Naive thymus-derived CD4-positive, alpha-beta T cell (primary cell): ENCODE measurements at regions of chr3 and their contacts with region 1.

Region 1: DNA sequence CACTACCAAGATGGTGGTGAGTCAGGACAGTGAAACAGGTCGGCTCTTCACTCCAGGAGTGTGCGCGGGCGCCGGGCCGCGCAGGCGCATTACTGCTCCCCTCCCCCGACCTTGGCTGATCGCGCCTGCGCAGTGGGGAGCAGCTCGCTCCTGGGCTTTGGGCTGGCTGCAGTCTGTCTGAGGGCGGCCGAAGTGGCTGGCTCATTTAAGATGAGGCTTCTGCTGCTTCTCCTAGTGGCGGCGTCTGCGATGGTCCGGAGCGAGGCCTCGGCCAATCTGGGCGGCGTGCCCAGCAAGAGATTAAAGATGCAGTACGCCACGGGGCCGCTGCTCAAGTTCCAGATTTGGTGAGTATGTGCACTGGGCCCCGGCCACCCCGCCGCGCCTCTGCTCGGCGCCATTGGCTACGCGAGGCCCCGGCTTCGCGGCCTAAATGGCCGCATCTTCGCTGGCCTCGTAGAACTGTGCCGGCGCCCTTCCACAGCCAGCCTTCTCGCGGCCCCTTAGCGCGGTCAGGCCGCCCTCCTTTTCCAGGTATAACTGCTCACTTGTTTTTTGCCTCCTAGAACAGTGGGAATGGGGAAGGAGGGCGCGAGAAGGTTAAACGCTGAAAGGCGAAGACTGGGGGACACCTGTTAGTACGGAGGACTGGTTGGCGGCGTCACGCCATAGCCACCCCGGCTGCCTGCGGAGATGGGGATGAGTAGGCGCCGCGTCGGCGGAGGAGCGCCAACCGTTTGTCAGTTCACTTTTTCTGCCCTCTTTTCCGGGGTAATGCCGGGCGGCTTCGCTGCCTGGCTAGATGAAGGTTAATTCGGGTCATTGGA is at the start of gene SELENOT:
- DNase-seq: peak; percentile 91 to 97 (median 96)
- ATAC-seq: peak; percentile 89
- H3K4me3 ChIP-seq: peak within 1 kb of the TSS; percentile 76
- H3K4me3 Mint-ChIP-seq: peak within 1 kb of the TSS; percentile 93 to 100 (median 98)
- H3K27ac ChIP-seq: peak within 1 kb of the TSS; percentile 90
- H3K27ac Mint-ChIP-seq: peak within 1 kb of the TSS; percentile 97 to 100 (median 99)
- H3K4me1 ChIP-seq: peaks cover 27 to 41% of the 10 kb centered on the region in 2 donors
- H3K4me1 Mint-ChIP-seq: peaks cover 43 to 78% (median 70%) of the 10 kb centered on the region in 7 donors
- H3K27me3 ChIP-seq: no peaks in the 10 kb centered on the region
- H3K27me3 Mint-ChIP-seq: no peaks in the 10 kb centered on the region
- total RNA-seq, gene SELENOT: 51.3 to 104 (median 78.1) TPM

Region 2: GRCh38 chr3:149646181-149646766 is 957.1 kb before region 1 on chr3:
- CTCF ChIA-PET with region 1: no interaction called
- POLR2A ChIA-PET with region 1: no interaction called
- intact Hi-C with region 1: no loop called
- DNase-seq: no peak
- ATAC-seq: no peak
- H3K4me3 ChIP-seq: no peak overlapping the region
- H3K4me3 Mint-ChIP-seq: no peak overlapping the region
- H3K27ac ChIP-seq: no peak overlapping the region
- H3K27ac Mint-ChIP-seq: no peak overlapping the region
- H3K4me1 ChIP-seq: no peaks in the 10 kb centered on the region
- H3K4me1 Mint-ChIP-seq: no peaks in the 10 kb centered on the region
- H3K27me3 ChIP-seq: no peaks in the 10 kb centered on the region
- H3K27me3 Mint-ChIP-seq: peaks cover 15 to 45% (median 28%) of the 10 kb centered on the region in 5 donors

Region 3: DNA sequence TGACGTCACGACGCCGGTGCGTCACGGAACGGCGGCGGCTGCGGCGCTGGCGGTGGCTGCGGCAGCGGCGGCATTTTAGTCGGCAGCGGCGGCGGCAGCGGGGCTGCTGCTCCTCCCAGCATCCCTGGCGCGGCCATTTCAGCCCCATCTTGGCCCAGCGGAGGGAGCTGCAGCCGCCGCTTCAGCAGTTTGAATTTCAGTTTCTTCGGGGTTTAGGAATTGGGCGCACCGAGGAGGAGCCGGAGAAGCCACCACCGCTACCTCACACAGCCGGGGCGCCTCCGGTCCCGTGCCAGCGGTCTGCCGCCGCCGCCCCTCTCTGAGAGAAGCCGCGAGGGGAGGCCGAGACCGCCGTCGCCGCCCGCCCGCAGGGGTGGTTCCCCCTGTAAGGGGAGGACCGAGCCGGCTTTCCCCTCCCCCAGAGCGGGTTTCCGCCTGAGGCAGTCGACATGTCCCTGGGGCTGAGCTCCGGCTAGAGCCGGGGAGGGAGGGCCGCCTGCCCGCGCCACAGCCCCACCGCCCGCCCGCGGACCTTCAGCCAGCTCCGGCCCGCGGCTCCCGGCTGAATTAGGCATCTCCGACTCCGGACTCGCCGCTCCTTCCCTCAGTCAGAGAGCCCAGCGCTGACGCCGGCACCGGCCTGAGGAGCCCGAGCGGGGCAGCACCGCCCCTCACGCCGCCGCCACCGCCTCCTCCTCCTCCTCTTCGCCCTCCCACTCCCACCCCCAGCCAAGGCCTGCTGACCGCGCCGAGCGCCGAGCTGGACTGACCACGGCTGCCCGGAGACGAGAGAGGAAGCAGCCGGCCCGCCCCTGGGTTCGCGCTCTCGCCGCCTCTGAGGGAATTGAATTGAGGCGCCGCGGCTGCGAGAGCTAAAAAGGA is 194.9 kb before region 1 on chr3 and contains the start of gene TSC22D2:
- CTCF ChIA-PET with region 1: no interaction called
- POLR2A ChIA-PET with region 1: interaction called, 21 read pairs
- intact Hi-C with region 1: loop called (anchors 1 kb)
- DNase-seq: peak; percentile 94 to 99 (median 98)
- ATAC-seq: peak; percentile 79
- H3K4me3 ChIP-seq: peak within 1 kb of the TSS; percentile 96
- H3K4me3 Mint-ChIP-seq: peak within 1 kb of the TSS; percentile 88 to 98 (median 91)
- H3K27ac ChIP-seq: peak within 1 kb of the TSS; percentile 98
- H3K27ac Mint-ChIP-seq: peak within 1 kb of the TSS; percentile 89 to 100 (median 98)
- H3K4me1 ChIP-seq: peaks cover 7 to 8% of the 10 kb centered on the region in 2 donors
- H3K4me1 Mint-ChIP-seq: peaks cover 25 to 41% (median 39%) of the 10 kb centered on the region in 7 donors
- H3K27me3 ChIP-seq: no peaks in the 10 kb centered on the region
- H3K27me3 Mint-ChIP-seq: peaks cover 0 to 13% (median 0%) of the 10 kb centered on the region in 5 donors
- total RNA-seq, gene TSC22D2: 17.9 to 42.1 (median 27.3) TPM

Region 4: GRCh38 chr3:150582620-150583019 is 20.7 kb before region 1 on chr3:
- CTCF ChIA-PET with region 1: interaction called, 3 read pairs
- POLR2A ChIA-PET with region 1: interaction called, 6 read pairs
- intact Hi-C with region 1: loop called in 1 of 2 experiments (anchors 2 kb)
- DNase-seq: no peak
- ATAC-seq: no peak
- H3K4me3 ChIP-seq: no peak overlapping the region
- H3K4me3 Mint-ChIP-seq: peak overlapping the region in 1 of 10 donors; percentile 20
- H3K27ac ChIP-seq: no peak overlapping the region
- H3K27ac Mint-ChIP-seq: peak overlapping the region in 3 of 9 donors; percentile 5 to 38 (median 25)
- H3K4me1 ChIP-seq: no peaks in the 10 kb centered on the region
- H3K4me1 Mint-ChIP-seq: peaks cover 0 to 19% (median 0%) of the 10 kb centered on the region in 7 donors
- H3K27me3 ChIP-seq: no peaks in the 10 kb centered on the region
- H3K27me3 Mint-ChIP-seq: no peaks in the 10 kb centered on the region

Region 5: DNA sequence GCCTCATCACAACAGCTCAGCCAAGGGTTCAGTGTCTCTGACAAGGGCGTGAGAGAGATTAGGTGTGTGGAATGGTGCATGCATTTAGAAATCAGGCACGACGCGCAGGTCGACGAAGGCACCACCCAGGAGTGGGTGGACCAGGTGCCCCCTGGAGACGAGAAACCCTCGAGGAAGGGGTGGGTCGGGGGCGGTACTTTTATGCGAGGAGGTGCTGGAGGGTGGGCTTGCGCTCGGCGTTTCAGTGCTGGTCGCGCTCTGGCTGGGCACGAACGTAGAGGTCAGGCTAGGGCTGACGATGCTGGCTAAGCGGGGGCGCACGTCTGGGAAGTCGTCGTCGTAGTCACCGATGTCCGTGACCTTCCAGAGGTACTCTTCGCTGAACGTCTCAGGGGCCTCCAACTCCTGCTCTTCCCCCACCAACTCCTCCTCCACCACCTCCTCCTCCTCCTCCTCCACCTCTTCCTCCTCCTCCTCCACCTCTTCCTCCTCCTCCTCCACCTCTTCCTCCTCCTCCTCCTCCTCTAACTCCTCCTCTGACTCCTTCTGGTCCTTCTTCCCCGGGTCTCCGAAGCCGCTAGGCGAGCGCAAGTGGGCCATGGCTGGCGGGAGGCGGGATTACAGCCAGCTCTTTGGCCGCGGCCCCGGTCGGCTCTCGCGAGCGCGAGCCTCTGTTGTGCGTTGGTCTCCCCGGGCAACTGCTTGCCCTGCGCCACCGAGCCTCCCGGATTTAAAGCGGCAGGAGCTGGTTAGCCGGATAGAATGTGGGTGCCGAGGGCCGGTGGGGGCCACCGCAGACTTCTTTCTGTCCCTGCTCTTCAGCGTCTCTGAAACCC is 100.2 kb after region 1 on chr3 and contains the start of gene ERICH6:
- CTCF ChIA-PET with region 1: no interaction called
- POLR2A ChIA-PET with region 1: interaction called, 9 read pairs
- intact Hi-C with region 1: loop called (anchors 1 kb)
- DNase-seq: peak; percentile 59 to 83 (median 71)
- ATAC-seq: peak; percentile 93
- H3K4me3 ChIP-seq: peak within 1 kb of the TSS; percentile 94
- H3K4me3 Mint-ChIP-seq: peak within 1 kb of the TSS; percentile 82 to 98 (median 97)
- H3K27ac ChIP-seq: peak within 1 kb of the TSS; percentile 84
- H3K27ac Mint-ChIP-seq: peak within 1 kb of the TSS; percentile 93 to 100 (median 97)
- H3K4me1 ChIP-seq: peaks cover 4 to 5% of the 10 kb centered on the region in 2 donors
- H3K4me1 Mint-ChIP-seq: peaks cover 11 to 24% (median 20%) of the 10 kb centered on the region in 7 donors
- H3K27me3 ChIP-seq: no peaks in the 10 kb centered on the region
- H3K27me3 Mint-ChIP-seq: peaks cover 0 to 6% (median 0%) of the 10 kb centered on the region in 5 donors
- total RNA-seq, gene ERICH6: 0.24 to 1.4 (median 0.53) TPM

Region 6: DNA sequence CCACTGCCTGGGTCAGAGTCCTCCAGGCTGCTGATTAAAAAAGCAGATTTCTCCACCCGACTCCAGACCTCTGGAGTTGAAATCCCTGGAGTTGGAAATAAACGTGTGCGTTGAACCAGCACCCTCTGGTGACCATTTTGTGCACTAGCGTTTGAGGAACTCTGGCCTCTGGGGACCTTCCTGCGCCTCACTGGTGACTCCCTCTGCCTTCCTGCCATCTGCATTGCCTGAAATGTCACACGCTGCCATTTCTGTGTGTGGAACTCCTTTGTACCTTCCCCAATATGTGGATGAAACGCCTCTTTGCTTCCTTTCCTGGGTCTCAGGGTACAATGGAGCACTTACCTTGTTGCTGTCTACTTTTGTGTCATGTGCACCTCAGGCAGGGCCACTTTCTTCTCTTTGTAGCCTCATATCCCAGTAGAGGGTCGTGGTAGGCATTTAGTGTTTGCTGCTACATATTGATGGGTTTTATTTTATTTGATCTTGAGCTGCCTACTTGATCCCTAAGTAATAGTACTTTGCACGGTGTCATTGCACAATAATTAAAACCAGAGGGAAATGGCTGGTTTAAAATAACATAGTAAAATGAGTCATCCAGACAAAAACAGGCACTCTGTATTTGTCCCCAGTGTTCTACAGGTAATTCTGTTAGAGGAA is 542.8 kb after region 1 on chr3:
- CTCF ChIA-PET with region 1: no interaction called
- POLR2A ChIA-PET with region 1: no interaction called
- intact Hi-C with region 1: loop called in 1 of 2 experiments (anchors 5 kb)
- DNase-seq: peak; percentile 25 to 63 (median 36)
- ATAC-seq: peak; percentile 92
- H3K4me3 ChIP-seq: no peak overlapping the region
- H3K4me3 Mint-ChIP-seq: no peak overlapping the region
- H3K27ac ChIP-seq: no peak overlapping the region
- H3K27ac Mint-ChIP-seq: no peak overlapping the region
- H3K4me1 ChIP-seq: peaks cover 0 to 3% of the 10 kb centered on the region in 2 donors
- H3K4me1 Mint-ChIP-seq: peaks cover 0 to 4% (median 0%) of the 10 kb centered on the region in 7 donors
- H3K27me3 ChIP-seq: no peaks in the 10 kb centered on the region
- H3K27me3 Mint-ChIP-seq: peaks cover 0 to 29% (median 11%) of the 10 kb centered on the region in 5 donors